ENCODE measurements at regions of chr16 and their contacts with region 1.

Region 1: DNA sequence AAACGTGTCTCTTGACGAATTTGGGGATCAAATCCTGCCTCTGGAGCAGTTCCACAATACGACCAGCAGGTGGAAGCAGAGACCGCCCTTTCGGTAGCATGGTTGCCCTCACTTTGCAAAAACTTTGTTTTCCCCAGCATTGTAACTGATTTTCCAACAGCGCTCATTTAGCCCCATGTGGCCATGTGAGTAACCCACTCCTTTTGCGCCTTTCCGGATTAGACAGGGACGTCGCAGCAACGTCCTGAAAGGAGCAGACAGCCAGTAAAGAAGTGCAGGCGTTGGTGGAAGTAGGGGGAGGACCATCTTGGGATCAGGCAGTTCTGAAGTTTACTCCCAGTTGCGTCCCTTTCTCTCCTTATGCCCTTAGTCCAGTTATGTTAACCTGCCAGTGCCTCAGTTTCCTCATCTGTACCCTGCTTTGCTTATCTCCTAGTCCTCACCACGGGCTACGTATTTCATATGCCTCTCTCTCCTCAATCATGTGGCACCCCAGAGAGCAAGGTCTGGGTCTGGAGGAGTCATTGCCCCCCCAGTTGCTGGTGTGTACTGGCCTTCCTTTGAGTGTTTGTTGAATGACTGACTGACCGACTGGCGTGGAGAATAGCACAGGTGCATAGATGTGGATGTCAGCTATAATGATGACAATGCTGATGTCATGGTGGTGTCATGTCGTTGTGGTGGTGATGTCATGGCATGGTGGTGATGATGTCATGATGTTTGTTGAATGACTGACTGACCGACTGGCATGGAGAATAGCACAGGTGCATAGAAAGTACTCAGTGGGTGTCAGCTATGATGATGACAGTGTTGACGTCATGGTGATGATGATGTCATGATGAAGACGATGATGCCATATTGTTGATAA is 22.3 kb downstream of the TMEM114 start:
- DNase-seq: peak; percentile 88 to 91
- H3K4me3 ChIP-seq: no peak overlapping the region
- H3K27ac ChIP-seq: no peak overlapping the region
- H3K4me1 ChIP-seq: peaks cover 2 to 43% (median 8%) of the 10 kb centered on the region in 4 experiments; a peak in 6 of 7 replicates
- H3K27me3 ChIP-seq: no peaks in the 10 kb centered on the region; a peak in 2 of 7 replicates
- CTCF ChIP-seq: peak; percentile 83 to 100 (median 99)
- EP300 ChIP-seq: 0 out of 3 replicates have a peak, but pooled peaks of 1 of the 2 experiments have one; percentile 57
- POLR2A ChIP-seq: no peak
- RAD21 ChIP-seq: peak; percentile 99 to 100

Region 2: DNA sequence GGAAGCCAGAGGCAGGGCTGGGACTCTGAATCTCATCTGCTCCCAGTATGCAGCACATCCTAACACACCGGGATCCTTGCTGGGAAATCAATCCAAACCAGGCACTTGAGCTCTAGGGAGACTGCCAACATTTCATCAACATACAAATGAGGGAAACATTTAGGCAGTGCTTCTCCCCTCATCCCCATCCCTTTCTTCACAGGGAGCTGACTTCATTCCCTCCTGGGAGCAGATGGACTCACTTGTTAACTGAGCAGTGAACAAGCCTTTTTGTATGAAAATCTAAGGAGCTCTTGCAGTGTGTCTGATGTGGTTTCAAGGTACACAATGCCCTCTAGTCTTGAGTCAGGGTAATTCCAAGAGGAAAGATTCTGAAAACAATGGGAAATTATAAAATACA is 74.0 kb before region 1 on chr16:
- CTCF ChIA-PET with region 1: no interaction called
- POLR2A ChIA-PET with region 1: no interaction called
- DNase-seq: peak in 1 of 2 experiments; percentile 50
- H3K4me3 ChIP-seq: no peak overlapping the region
- H3K27ac ChIP-seq: no peak overlapping the region
- H3K4me1 ChIP-seq: peaks cover 0 to 6% (median 0%) of the 10 kb centered on the region in 4 experiments; a peak in 4 of 7 replicates
- H3K27me3 ChIP-seq: peaks cover 0 to 2% (median 0%) of the 10 kb centered on the region in 4 experiments; a peak in 1 of 7 replicates
- CTCF ChIP-seq: peak in 1 of 3 experiments; percentile 28; a peak in 2 of 4 replicates
- EP300 ChIP-seq: no peak
- POLR2A ChIP-seq: no peak
- RAD21 ChIP-seq: peak; percentile 63

Region 3: GRCh38 chr16:8581831-8582580 is 14.0 kb after region 1 on chr16:
- CTCF ChIA-PET with region 1: interaction called, 162 read pairs
- POLR2A ChIA-PET with region 1: interaction called, 12 read pairs
- DNase-seq: no peak
- H3K4me3 ChIP-seq: no peak overlapping the region
- H3K27ac ChIP-seq: no peak overlapping the region
- H3K4me1 ChIP-seq: peaks cover 0 to 3% (median 0%) of the 10 kb centered on the region in 4 experiments; a peak in 2 of 7 replicates
- H3K27me3 ChIP-seq: no peaks in the 10 kb centered on the region; a peak in 1 of 7 replicates
- CTCF ChIP-seq: no peak
- EP300 ChIP-seq: no peak
- POLR2A ChIP-seq: no peak
- RAD21 ChIP-seq: no peak

Region 4: GRCh38 chr16:8589057-8589899 is 21.3 kb after region 1 on chr16:
- CTCF ChIA-PET with region 1: interaction called, 162 read pairs
- POLR2A ChIA-PET with region 1: interaction called, 12 read pairs
- DNase-seq: peak in 1 of 2 experiments; percentile 78
- H3K4me3 ChIP-seq: peak overlapping the region; percentile 52 to 69 (median 60)
- H3K27ac ChIP-seq: no peak overlapping the region
- H3K4me1 ChIP-seq: peaks cover 0 to 12% (median 5%) of the 10 kb centered on the region in 4 experiments; a peak in 3 of 7 replicates
- H3K27me3 ChIP-seq: peaks cover 10 to 33% (median 21%) of the 10 kb centered on the region in 4 experiments
- CTCF ChIP-seq: peak in 2 of 3 experiments; percentile 8 to 12; a peak in 2 of 4 replicates
- EP300 ChIP-seq: no peak
- POLR2A ChIP-seq: no peak
- RAD21 ChIP-seq: no peak

Region 5: DNA sequence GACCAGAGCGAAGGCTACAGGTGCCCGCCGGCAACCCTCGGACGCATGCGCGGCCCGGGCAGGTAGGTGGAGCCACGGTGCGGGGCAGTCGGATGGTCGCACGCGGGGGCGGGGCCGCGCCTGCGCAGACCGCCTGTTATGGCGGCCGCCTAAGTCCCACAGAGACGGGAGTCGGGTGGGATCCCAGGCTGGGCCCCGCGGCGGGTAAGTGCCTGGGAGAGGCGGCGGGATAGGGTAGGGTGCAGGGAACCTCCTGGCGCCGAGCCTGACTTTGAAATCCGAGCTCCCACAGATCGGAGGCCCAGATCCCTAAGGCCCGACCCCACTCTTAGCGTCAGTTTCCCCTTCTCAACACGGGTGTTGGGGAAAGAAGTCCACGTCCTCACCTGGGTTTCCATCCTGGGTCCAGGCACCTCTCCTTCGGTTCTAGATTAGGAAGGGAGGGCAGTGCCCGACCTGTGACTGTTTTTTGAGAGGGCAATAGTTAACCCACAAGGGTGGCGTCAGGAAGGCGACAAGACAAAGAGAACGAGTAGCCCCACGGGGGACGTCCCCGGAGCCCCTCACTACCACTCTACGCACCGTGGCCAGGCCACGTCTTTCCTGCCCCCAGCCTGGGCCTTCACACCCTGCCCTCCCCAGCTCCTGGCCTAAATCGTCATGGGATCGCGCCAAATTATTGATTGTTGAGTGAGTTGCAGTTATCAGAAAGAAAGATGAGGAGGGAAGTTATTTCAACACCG is 53.8 kb after region 1 on chr16 and contains the start of gene METTL22:
- CTCF ChIA-PET with region 1: interaction called, 416 read pairs
- POLR2A ChIA-PET with region 1: interaction called, 4 read pairs
- DNase-seq: peak; percentile 65 to 95
- H3K4me3 ChIP-seq: peak within 1 kb of the TSS; percentile 74 to 94 (median 87)
- H3K27ac ChIP-seq: peak within 1 kb of the TSS; percentile 94
- H3K4me1 ChIP-seq: no peaks in the 10 kb centered on the region; a peak in 1 of 7 replicates
- H3K27me3 ChIP-seq: no peaks in the 10 kb centered on the region
- CTCF ChIP-seq: no peak
- EP300 ChIP-seq: no peak
- POLR2A ChIP-seq: peak; percentile 65 to 94
- RAD21 ChIP-seq: no peak
- total RNA-seq, gene METTL22: 56.0 and 56.7 TPM in 2 replicates

Region 6: DNA sequence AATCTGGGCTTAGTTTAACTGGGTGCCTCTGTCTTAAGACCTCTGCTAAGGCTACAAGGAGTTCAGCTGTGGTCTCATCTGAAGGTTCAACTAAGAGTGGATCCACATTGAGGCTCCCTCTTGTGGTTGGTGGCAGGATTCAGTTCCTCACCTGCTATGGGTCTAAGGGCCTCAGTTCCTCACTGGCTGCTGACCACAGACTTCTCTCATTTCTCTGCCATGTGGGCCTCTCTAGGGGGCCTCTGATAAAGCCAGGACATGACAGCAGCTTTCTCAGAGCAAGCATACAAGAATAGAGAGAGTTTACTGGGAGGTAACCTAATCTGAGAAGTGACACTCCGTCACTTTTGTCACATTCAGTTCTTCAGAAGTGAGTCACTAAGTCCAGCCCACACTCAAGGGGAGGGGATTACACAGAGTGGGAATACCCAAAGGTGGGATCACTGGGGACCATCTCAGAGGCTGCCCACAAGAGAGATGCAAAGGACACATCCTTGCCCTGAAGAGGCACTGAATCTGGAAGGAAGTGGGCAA is 87.3 kb after region 1 on chr16:
- CTCF ChIA-PET with region 1: interaction called, 90 read pairs
- POLR2A ChIA-PET with region 1: interaction called, 10 read pairs
- DNase-seq: no peak
- H3K4me3 ChIP-seq: no peak overlapping the region
- H3K27ac ChIP-seq: no peak overlapping the region
- H3K4me1 ChIP-seq: no peaks in the 10 kb centered on the region
- H3K27me3 ChIP-seq: no peaks in the 10 kb centered on the region
- CTCF ChIP-seq: peak; percentile 41 to 64 (median 59)
- EP300 ChIP-seq: no peak
- POLR2A ChIP-seq: no peak
- RAD21 ChIP-seq: peak; percentile 45 to 53

Region 7: DNA sequence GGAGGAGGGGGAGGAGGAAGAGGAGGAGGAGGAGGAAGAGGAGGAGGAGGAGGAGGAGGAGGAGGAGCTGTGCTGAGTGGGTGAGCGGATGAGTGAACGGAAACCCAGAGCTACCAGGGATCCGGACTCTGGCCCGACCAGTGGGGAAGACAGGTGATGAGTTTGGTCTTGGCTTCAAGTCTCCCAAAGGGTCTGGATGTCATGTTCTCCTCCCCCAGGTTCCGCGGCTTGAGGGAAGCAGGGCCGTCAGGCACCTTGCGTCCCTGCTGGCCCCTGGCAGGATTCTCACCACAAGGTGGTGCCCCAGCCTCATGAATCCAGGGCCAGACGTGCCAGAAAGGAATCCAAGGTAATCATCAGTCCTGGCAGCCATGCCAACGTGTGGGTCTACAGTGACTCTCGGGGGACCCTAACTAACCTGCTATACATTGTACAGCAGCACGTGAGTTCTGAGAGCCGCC is 92.9 kb after region 1 on chr16:
- CTCF ChIA-PET with region 1: interaction called, 90 read pairs
- POLR2A ChIA-PET with region 1: no interaction called
- DNase-seq: peak; percentile 67 to 87
- H3K4me3 ChIP-seq: no peak overlapping the region
- H3K27ac ChIP-seq: no peak overlapping the region
- H3K4me1 ChIP-seq: peaks cover 0 to 3% (median 0%) of the 10 kb centered on the region in 4 experiments; a peak in 2 of 7 replicates
- H3K27me3 ChIP-seq: no peaks in the 10 kb centered on the region
- CTCF ChIP-seq: peak; percentile 94 to 96 (median 95)
- EP300 ChIP-seq: no peak
- POLR2A ChIP-seq: no peak
- RAD21 ChIP-seq: peak; percentile 99 to 100

Measured in H1 (cell line).